ENCODE measurements at regions of chr14 and their contacts with region 1.

Region 1: DNA sequence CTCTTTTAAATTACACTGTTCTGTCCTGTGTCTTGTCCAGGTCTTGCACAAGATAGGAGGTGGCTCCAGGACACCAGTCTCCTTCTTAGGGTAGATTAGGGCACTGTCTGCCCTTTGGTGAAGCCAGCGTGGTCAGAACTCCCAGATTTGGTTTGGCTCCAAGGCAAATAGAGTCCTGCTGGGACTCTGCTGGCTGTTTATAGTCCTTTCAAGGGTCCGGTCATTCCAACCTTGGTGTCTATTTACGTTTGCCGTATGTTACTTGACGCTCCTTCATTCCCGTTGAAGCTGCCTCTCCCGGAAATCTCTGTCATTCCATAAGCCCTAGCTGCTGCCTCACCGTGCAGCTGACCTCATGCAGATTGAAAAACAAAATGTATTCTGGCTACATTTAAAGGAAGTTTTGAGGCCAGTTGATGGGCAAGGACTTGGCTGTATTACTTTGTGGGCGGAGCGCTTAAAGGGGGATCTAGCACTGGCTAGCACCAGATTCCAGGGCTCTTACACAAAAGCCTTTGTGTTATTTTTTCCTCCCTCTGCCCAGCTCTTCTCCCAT is 180.6 kb downstream of the AKAP6 start:
- DNase-seq: peak; percentile 46 to 91
- H3K4me3 ChIP-seq: peak overlapping the region in 1 of 2 donors; percentile 50
- H3K27ac ChIP-seq: peak overlapping the region; percentile 88 to 91
- H3K4me1 ChIP-seq: peaks cover 0 to 27% of the 10 kb centered on the region in 2 donors
- H3K27me3 ChIP-seq: no peaks in the 10 kb centered on the region
- CTCF ChIP-seq: no peak

Region 2: DNA sequence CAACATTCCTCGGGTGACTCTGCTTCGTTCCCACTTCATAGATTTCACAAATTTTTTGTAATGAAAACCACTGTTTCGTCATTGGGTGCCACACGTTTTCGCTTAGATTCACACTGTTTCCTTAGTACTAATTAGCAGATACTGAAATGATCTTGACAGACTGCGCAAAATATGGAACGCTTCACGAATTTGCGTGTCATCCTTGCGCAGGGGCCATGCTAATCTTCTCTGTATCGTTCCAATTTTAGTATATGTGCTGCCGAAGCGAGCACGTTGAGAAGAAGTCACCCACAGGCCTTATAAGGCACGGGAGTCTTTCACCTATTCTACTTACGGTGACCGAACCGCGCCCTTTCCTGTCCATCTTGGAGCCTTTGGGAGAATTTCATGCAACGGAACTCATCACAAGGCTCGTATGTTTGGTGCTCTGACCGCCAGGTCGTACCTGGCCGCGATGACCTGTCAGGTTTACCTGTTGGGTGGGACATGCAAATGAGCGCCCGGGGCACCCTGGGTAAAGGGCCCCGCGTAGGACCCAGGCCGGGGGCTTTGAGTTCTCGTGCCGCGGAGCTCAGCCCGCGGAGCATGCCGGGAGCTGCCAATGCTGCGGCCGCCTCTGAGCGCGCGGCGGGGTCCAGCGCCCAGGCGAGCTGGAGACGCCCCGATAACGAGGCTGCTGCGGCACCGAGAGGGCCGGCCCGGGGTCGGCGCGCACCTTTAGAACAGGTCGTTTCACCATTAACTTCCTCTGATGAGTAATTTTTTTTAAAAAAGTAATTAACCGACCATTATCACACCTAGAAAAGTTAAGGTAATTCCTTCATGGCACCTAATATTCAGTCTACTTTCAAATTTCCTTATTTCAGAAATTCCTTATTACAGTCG is 306.5 kb before region 1 on chr14 and contains the start of gene RNU6-8:
- intact Hi-C with region 1: loop called (anchors 2 kb)
- DNase-seq: peak; percentile 40 to 91
- H3K4me3 ChIP-seq: peak within 1 kb of the TSS; percentile 72 to 75
- H3K27ac ChIP-seq: peak within 1 kb of the TSS; percentile 69 to 75
- H3K4me1 ChIP-seq: no peaks in the 10 kb centered on the region
- H3K27me3 ChIP-seq: no peaks in the 10 kb centered on the region
- CTCF ChIP-seq: no peak
- total RNA-seq, gene RNU6-8: not detected

Region 3: GRCh38 chr14:32370720-32371119 is 139.0 kb before region 1 on chr14:
- intact Hi-C with region 1: loop called (anchors 5 kb)
- DNase-seq: no peak
- H3K4me3 ChIP-seq: no peak overlapping the region
- H3K27ac ChIP-seq: no peak overlapping the region
- H3K4me1 ChIP-seq: peaks cover 0 to 21% of the 10 kb centered on the region in 2 donors
- H3K27me3 ChIP-seq: no peaks in the 10 kb centered on the region
- CTCF ChIP-seq: no peak

Region 4: DNA sequence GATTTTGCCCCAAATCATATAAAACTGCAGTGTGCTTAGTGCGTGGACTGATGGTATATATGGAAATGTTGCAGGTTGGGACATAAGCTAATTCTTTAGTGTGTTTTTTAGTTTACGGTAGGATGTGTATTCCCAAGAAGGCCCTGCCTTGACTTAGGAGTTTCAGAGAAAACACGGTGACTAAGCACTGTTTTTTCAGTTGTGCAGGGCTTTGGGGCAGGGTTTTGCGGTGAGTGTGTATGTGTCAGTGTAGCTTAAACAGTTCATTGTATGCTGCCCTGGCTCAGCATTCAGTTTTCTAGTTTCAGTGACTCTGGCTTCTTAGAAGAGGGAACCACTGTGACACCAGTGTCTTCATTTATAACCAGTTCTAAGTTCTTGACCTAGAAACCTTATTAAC is 79.4 kb before region 1 on chr14:
- intact Hi-C with region 1: loop called (anchors 1 kb)
- DNase-seq: no peak
- H3K4me3 ChIP-seq: no peak overlapping the region
- H3K27ac ChIP-seq: peak overlapping the region in 1 of 2 donors; percentile 85
- H3K4me1 ChIP-seq: peaks cover 0 to 4% of the 10 kb centered on the region in 2 donors
- H3K27me3 ChIP-seq: no peaks in the 10 kb centered on the region
- CTCF ChIP-seq: no peak

Region 5: GRCh38 chr14:32469388-32470160 is 40.1 kb before region 1 on chr14:
- intact Hi-C with region 1: loop called (anchors 5 kb)
- DNase-seq: no peak
- H3K4me3 ChIP-seq: no peak overlapping the region
- H3K27ac ChIP-seq: peak overlapping the region; percentile 65 to 83
- H3K4me1 ChIP-seq: peaks cover 5 to 35% of the 10 kb centered on the region in 2 donors
- H3K27me3 ChIP-seq: no peaks in the 10 kb centered on the region
- CTCF ChIP-seq: peak; percentile 23 to 59 (median 51)

Region 6: DNA sequence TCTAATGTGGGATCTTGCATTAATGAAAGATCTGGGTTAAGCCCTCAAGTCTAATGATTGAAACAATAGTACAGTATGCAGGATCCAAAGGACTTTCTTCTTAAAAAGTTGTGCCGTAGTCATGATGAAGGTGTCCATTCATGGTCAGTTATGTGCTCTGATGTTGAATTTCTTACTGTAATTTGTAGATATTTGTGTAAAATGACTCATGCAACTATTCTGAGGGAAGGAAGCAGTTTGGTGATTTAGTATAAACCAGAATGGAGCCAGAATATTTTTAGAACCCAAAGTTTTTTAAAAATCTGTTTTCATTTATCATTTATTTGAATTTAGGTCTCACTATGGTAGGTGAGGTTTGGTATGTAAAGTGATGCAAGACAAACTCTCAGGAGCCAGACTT is 29.4 kb before region 1 on chr14:
- intact Hi-C with region 1: loop called (anchors 2 kb)
- DNase-seq: no peak
- H3K4me3 ChIP-seq: peak overlapping the region in 1 of 2 donors; percentile 1
- H3K27ac ChIP-seq: peak overlapping the region; percentile 75 to 77
- H3K4me1 ChIP-seq: peaks cover 12 to 49% of the 10 kb centered on the region in 2 donors
- H3K27me3 ChIP-seq: no peaks in the 10 kb centered on the region
- CTCF ChIP-seq: no peak

Region 7: DNA sequence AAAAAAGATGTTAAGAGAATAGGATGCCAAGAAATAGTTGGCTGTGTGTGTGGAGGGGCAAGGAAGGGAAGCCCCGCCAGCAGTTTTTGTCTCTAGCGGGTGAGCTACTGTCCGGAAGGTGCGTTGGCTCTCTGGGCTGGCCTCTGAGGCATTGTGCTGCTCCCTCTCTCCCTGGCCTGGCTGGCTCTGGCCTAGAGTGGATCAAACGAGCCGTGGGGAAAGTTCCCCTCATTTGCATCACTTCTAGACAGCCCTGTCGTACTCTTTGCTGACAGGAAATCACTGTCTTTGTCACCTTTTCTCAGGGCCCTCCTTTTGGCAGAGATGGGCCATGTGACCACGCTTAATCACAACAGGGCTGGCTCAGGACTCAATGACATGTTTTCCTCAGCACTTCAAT is 192.9 kb after region 1 on chr14:
- intact Hi-C with region 1: loop called (anchors 2 kb)
- DNase-seq: peak; percentile 41 to 89
- H3K4me3 ChIP-seq: peak overlapping the region; percentile 23 to 38
- H3K27ac ChIP-seq: peak overlapping the region; percentile 83 to 88
- H3K4me1 ChIP-seq: peaks cover 3 to 38% of the 10 kb centered on the region in 2 donors
- H3K27me3 ChIP-seq: no peaks in the 10 kb centered on the region
- CTCF ChIP-seq: no peak

Measured in ascending aorta (tissue), 2 donors.